Endothelial cell of umbilical vein (primary cell): ENCODE measurements at regions of chr12 and their contacts with region 1.

Region 1: DNA sequence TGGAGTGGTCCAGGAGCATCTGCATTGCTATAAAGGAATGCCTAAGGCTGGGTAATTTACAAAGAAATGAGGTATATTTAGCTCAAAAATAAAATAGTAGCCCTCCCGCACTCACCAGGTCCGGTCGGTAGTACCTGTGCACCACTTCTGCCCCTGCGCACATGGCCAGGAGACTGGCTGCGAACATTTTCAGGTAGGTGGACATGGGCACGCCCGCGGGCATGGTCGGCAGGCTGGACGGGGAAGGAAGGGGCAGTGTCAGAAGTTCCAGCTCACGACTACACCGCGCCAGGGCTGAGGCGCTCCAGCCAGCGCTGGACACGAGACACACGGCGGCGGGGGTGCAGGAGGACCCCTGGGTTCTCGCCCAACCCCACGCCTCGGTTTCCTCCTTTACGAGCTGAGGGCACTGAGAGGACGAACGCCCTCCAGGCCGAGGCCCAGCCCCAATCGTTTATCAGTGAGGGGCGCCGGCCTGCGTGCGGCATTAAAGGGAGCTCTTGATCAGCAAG is 9.1 kb upstream of the TDG start:
- DNase-seq: no peak
- H3K4me3 ChIP-seq: peak overlapping the region; percentile 60 to 86 (median 83)
- H3K27ac ChIP-seq: peak overlapping the region; percentile 2
- H3K4me1 ChIP-seq: peaks cover 9% of the 10 kb centered on the region
- H3K27me3 ChIP-seq: no peaks in the 10 kb centered on the region
- CTCF ChIP-seq: no peak
- POLR2A ChIP-seq: no peak

Region 2: GRCh38 chr12:103667125-103667524 is 289.4 kb before region 1 on chr12:
- CTCF ChIA-PET with region 1: no interaction called
- POLR2A ChIA-PET with region 1: no interaction called
- dilution Hi-C with region 1: no loop called
- intact Hi-C with region 1: no loop called
- DNase-seq: peak; percentile 80
- H3K4me3 ChIP-seq: no peak overlapping the region
- H3K27ac ChIP-seq: no peak overlapping the region
- H3K4me1 ChIP-seq: no peaks in the 10 kb centered on the region
- H3K27me3 ChIP-seq: no peaks in the 10 kb centered on the region
- CTCF ChIP-seq: no peak
- POLR2A ChIP-seq: no peak

Region 3: DNA sequence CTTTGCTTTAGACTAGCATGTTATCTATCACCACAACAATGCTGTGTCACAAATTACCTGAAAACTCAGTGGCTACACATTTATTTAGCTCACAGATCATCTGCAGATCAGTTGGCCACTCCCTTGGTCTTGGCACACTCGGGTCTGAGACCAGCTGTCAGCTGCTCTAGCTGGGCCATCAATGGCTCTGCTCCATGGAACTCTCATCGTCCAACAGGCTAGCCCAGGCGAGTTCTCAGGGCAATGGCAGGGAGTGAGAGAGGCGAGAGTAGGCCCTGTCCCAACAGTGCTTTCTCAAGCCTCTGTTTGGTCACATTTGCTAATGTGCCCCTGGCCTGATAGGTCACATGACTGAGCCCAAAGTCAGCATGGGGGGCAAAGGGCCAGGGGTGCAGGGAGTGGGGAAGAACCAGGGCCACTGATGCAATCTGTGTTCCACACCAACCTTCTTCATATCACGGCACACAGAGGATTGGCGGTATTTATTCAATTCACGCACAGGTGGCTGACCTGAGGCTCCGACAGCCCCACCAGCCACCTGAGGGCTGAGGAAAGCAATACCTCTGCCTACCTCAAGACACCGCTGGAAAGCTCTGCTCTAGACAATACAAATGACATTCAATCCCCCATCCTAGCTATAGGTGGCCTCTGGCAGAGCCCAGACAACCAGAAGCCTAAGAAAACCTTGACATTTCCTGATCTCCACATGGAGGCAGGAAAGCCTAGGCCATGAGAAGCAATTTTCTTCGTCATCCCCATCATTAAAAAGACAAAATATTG is 198.1 kb before region 1 on chr12:
- CTCF ChIA-PET with region 1: no interaction called
- POLR2A ChIA-PET with region 1: no interaction called
- dilution Hi-C with region 1: no loop called
- intact Hi-C with region 1: no loop called
- DNase-seq: no peak
- H3K4me3 ChIP-seq: no peak overlapping the region
- H3K27ac ChIP-seq: no peak overlapping the region
- H3K4me1 ChIP-seq: no peaks in the 10 kb centered on the region
- H3K27me3 ChIP-seq: no peaks in the 10 kb centered on the region
- CTCF ChIP-seq: no peak
- POLR2A ChIP-seq: no peak

Region 4: GRCh38 chr12:104064031-104064822 is 107.7 kb after region 1 on chr12 and contains the start of gene HCFC2:
- CTCF ChIA-PET with region 1: no interaction called
- POLR2A ChIA-PET with region 1: no interaction called
- dilution Hi-C with region 1: no loop called
- intact Hi-C with region 1: loop called (anchors 2 kb)
- DNase-seq: peak; percentile 89
- H3K4me3 ChIP-seq: peak within 1 kb of the TSS; percentile 86 to 89 (median 86)
- H3K27ac ChIP-seq: peak within 1 kb of the TSS; percentile 41
- H3K4me1 ChIP-seq: peaks cover 10% of the 10 kb centered on the region
- H3K27me3 ChIP-seq: no peaks in the 10 kb centered on the region
- CTCF ChIP-seq: no peak
- POLR2A ChIP-seq: peak; percentile 75
- total RNA-seq, gene HCFC2: 13.4 and 15.6 TPM in 2 replicates

Region 5: DNA sequence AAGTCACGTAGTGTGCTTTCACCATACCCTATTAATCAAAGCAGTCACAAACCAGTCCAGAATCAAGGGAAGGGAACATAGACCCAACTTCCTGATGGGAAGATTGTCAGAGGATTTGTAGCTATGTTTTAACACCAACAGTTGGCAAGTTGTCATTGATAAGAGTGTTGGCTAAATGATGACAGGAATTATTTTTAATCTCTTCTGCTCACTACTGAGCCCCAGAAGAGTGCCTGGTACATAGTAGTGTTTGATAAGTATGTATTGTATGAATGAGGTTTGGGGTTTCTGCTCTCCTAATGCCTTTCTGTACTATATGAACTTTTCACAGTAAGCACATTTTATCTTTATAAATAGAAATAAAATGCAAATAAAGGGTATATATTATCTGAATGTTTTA is 122.5 kb after region 1 on chr12:
- CTCF ChIA-PET with region 1: no interaction called
- POLR2A ChIA-PET with region 1: interaction called, 16 read pairs
- dilution Hi-C with region 1: no loop called
- intact Hi-C with region 1: no loop called
- DNase-seq: no peak
- H3K4me3 ChIP-seq: no peak overlapping the region
- H3K27ac ChIP-seq: no peak overlapping the region
- H3K4me1 ChIP-seq: no peaks in the 10 kb centered on the region
- H3K27me3 ChIP-seq: no peaks in the 10 kb centered on the region
- CTCF ChIP-seq: no peak
- POLR2A ChIP-seq: no peak